Activated naive CD4-positive, alpha-beta T cell treated with anti-CD3 and anti-CD28 coated beads for 36 hours (primary cell): ENCODE measurements at regions of chr13 and their contacts with region 1.

Region 1: GRCh38 chr13:21402586-21403228 is 56.4 kb downstream of the ZDHHC20 start:
- DNase-seq: peak; percentile 43
- H3K4me3 Mint-ChIP-seq: no peak overlapping the region
- H3K27ac Mint-ChIP-seq: no peak overlapping the region
- H3K4me1 Mint-ChIP-seq: peaks cover 46% of the 10 kb centered on the region
- H3K27me3 Mint-ChIP-seq: no peaks in the 10 kb centered on the region

Region 2: DNA sequence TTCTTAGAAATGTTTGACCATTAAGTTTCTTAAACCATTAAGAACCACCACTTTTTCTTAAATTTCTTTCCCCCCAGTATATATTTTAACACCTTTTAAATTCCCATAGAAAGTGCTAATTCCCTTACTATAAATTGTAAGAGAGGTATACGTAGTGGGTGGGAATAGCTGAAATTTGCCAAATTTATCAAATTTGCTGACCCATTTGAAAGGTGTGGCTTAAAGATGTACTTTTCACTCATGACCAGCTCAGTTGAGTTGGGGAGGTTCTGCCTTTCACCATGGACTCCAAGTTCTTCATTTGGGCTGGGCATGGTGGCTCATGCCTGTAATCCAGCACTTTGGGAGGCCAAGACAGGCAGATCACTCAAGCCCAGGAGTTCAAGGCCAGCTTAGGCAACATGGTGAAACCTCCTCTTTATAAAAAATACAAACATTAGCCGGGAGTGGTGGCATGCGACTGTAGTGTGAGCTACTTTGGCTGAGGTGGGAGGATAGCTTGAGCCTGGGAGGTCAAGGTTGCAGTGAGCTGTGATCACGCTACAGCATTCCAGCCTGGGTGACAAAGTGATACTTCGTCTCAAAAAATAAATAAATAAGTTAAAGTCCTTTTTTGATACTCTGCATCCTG is 93.0 kb before region 1 on chr13:
- CTCF ChIA-PET with region 1: no interaction called
- intact Hi-C with region 1: no loop called
- DNase-seq: no peak
- H3K4me3 Mint-ChIP-seq: no peak overlapping the region
- H3K27ac Mint-ChIP-seq: no peak overlapping the region
- H3K4me1 Mint-ChIP-seq: peaks cover 6% of the 10 kb centered on the region
- H3K27me3 Mint-ChIP-seq: no peaks in the 10 kb centered on the region

Region 3: DNA sequence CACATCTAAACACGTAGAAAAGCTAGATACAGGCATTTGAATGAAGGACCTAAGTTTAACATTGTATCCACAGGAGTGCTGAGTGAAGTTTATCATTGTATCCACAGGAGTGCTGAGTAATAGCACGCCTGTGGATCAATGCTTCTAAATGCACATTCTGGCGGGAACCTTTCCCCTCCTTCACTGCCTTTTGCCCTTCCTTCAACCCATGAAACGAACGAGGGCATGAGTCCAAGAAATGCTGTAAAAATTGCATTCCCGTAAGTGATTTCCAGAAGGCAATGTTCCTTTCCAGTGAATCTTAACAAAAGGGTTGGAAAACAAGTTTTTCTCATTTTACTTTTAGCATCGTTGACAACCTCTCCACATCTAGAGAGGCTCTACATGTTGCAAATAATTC is 31.7 kb before region 1 on chr13:
- CTCF ChIA-PET with region 1: no interaction called
- intact Hi-C with region 1: no loop called
- DNase-seq: no peak
- H3K4me3 Mint-ChIP-seq: no peak overlapping the region
- H3K27ac Mint-ChIP-seq: no peak overlapping the region
- H3K4me1 Mint-ChIP-seq: no peaks in the 10 kb centered on the region
- H3K27me3 Mint-ChIP-seq: no peaks in the 10 kb centered on the region

Region 4: GRCh38 chr13:21435710-21436151 is 33.0 kb after region 1 on chr13:
- CTCF ChIA-PET with region 1: no interaction called
- intact Hi-C with region 1: loop called (anchors 2 kb)
- DNase-seq: peak; percentile 60
- H3K4me3 Mint-ChIP-seq: no peak overlapping the region
- H3K27ac Mint-ChIP-seq: no peak overlapping the region
- H3K4me1 Mint-ChIP-seq: peaks cover 29% of the 10 kb centered on the region
- H3K27me3 Mint-ChIP-seq: no peaks in the 10 kb centered on the region

Region 5: GRCh38 chr13:21458813-21459701 is 56.4 kb after region 1 on chr13 and contains the start of gene ZDHHC20:
- CTCF ChIA-PET with region 1: no interaction called
- intact Hi-C with region 1: loop called (anchors 1 kb)
- DNase-seq: peak; percentile 89
- H3K4me3 Mint-ChIP-seq: peak within 1 kb of the TSS; percentile 92
- H3K27ac Mint-ChIP-seq: peak within 1 kb of the TSS; percentile 88
- H3K4me1 Mint-ChIP-seq: peaks cover 29% of the 10 kb centered on the region
- H3K27me3 Mint-ChIP-seq: no peaks in the 10 kb centered on the region
- total RNA-seq, gene ZDHHC20: 48.0 to 50.7 TPM

Region 6: GRCh38 chr13:21670883-21671619 is 268.3 kb after region 1 on chr13 and contains the start of gene FGF9:
- CTCF ChIA-PET with region 1: no interaction called
- intact Hi-C with region 1: loop called (anchors 5 kb)
- DNase-seq: peak; percentile 79
- H3K4me3 Mint-ChIP-seq: peak within 1 kb of the TSS; percentile 80
- H3K27ac Mint-ChIP-seq: no peak within 1 kb of the TSS
- H3K4me1 Mint-ChIP-seq: peaks cover 34% of the 10 kb centered on the region
- H3K27me3 Mint-ChIP-seq: peaks cover 32% of the 10 kb centered on the region
- total RNA-seq, gene FGF9: not detected